ENCODE measurements at regions of chr10 and their contacts with region 1.

Region 1: GRCh38 chr10:27658788-27659187 is 86.8 kb downstream of the MKX start:
- DNase-seq: no peak
- H3K4me3 ChIP-seq: no peak overlapping the region
- H3K27ac ChIP-seq: no peak overlapping the region
- H3K4me1 ChIP-seq: peaks cover 0 to 31% (median 7%) of the 10 kb centered on the region in 6 donors
- H3K27me3 ChIP-seq: peaks cover 0 to 25% (median 0%) of the 10 kb centered on the region in 7 donors
- CTCF ChIP-seq: no peak
- POLR2A ChIP-seq: no peak

Region 2: DNA sequence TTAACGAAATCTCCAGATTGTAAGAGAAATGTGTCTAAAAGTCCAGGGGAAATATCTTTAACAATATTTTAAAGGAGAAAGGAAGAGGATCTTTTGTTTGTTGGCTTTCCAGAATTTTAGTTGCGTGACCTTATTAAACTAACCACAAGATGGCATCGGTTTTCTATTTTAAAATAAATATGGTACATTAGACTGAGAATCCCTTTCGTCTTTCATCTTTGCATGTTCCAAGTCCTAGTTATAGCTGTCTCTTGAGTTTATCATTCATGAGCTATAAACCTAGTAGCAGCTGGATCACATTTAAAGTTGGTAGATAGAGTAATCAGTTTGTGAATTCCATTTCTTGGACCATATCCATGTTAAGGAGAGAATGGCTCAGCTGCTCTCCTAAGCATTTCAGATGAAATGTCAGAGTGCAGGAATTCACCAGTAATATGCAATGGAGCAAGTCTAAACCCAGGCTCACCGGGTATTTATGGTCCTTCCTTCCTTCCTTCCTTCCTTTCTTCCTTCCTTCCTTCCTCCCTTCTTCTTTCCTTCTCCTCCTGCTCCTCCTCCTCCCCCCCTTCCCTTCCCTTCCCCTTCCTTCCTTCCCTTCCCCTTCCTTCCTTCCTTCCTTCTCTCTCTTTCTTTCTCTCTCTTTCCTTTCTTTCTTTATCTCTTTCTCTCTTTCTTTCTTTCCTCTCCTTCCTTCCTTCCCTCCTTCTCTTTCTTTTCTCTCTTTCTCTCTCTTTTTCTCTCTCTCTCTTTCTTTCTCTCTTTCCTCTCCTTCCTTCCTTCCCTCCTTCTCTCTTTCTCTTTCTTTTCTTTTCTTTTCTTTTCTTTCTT is 212.5 kb before region 1 on chr10:
- intact Hi-C with region 1: loop called (anchors 5 kb)
- DNase-seq: no peak
- H3K4me3 ChIP-seq: no peak overlapping the region
- H3K27ac ChIP-seq: peak overlapping the region in 2 of 8 donors; percentile 74 to 80
- H3K4me1 ChIP-seq: peaks cover 0 to 42% (median 2%) of the 10 kb centered on the region in 6 donors
- H3K27me3 ChIP-seq: no peaks in the 10 kb centered on the region
- CTCF ChIP-seq: peak in 9 of 11 experiments; percentile 19 to 58 (median 54)
- POLR2A ChIP-seq: no peak

Region 3: GRCh38 chr10:27884185-27884641 is 225.4 kb after region 1 on chr10:
- intact Hi-C with region 1: no loop called
- DNase-seq: no peak
- H3K4me3 ChIP-seq: no peak overlapping the region
- H3K27ac ChIP-seq: no peak overlapping the region
- H3K4me1 ChIP-seq: no peaks in the 10 kb centered on the region
- H3K27me3 ChIP-seq: no peaks in the 10 kb centered on the region
- CTCF ChIP-seq: no peak
- POLR2A ChIP-seq: no peak

Measured in spleen (tissue), 13 donors.